ENCODE measurements at regions of chr17 and their contacts with region 1.

Region 1: GRCh38 chr17:32161506-32162365 is 19.4 kb downstream of the RHOT1 start:
- DNase-seq: no peak
- H3K4me3 Mint-ChIP-seq: no peak overlapping the region
- H3K27ac Mint-ChIP-seq: no peak overlapping the region
- H3K4me1 Mint-ChIP-seq: no peaks in the 10 kb centered on the region
- H3K27me3 Mint-ChIP-seq: no peaks in the 10 kb centered on the region

Region 2: GRCh38 chr17:32006957-32007462 is 154.7 kb before region 1 on chr17 and contains the start of gene LRRC37B:
- CTCF ChIA-PET with region 1: no interaction called
- POLR2A ChIA-PET with region 1: interaction called, 14 read pairs
- DNase-seq: peak; percentile 88
- H3K4me3 Mint-ChIP-seq: peak within 1 kb of the TSS; percentile 84
- H3K27ac Mint-ChIP-seq: peak within 1 kb of the TSS; percentile 91
- H3K4me1 Mint-ChIP-seq: peaks cover 37% of the 10 kb centered on the region
- H3K27me3 Mint-ChIP-seq: no peaks in the 10 kb centered on the region
- total RNA-seq, gene LRRC37B: 33.0 to 36.3 TPM

Region 3: GRCh38 chr17:32174889-32175288 is 13.2 kb after region 1 on chr17:
- CTCF ChIA-PET with region 1: no interaction called
- POLR2A ChIA-PET with region 1: no interaction called
- DNase-seq: no peak
- H3K4me3 Mint-ChIP-seq: no peak overlapping the region
- H3K27ac Mint-ChIP-seq: no peak overlapping the region
- H3K4me1 Mint-ChIP-seq: no peaks in the 10 kb centered on the region
- H3K27me3 Mint-ChIP-seq: no peaks in the 10 kb centered on the region

Measured in activated CD4-positive, alpha-beta T cell treated with anti-CD3 and anti-CD28 coated beads, Interleukin-2, amount 10 ng/mL, durations not matched to agents 7 days and 5 days (primary cell).